ENCODE measurements at regions of chr1 and their contacts with region 1.

Region 1: GRCh38 chr1:176479971-176480370 is 17.0 kb downstream of the PAPPA2 start:
- DNase-seq: no peak
- H3K4me3 ChIP-seq: no peak overlapping the region
- H3K27ac ChIP-seq: no peak overlapping the region
- H3K4me1 ChIP-seq: no peaks in the 10 kb centered on the region
- H3K27me3 ChIP-seq: peaks cover 5% of the 10 kb centered on the region
- CTCF ChIP-seq: no peak

Region 2: GRCh38 chr1:176517484-176517883 is 37.5 kb after region 1 on chr1:
- CTCF ChIA-PET with region 1: no interaction called
- dilution Hi-C with region 1: no loop called
- in situ Hi-C with region 1: no loop called
- intact Hi-C with region 1: no loop called
- DNase-seq: peak; percentile 84
- H3K4me3 ChIP-seq: no peak overlapping the region
- H3K27ac ChIP-seq: no peak overlapping the region
- H3K4me1 ChIP-seq: peaks cover 18% of the 10 kb centered on the region
- H3K27me3 ChIP-seq: peaks cover 4% of the 10 kb centered on the region
- CTCF ChIP-seq: no peak

Region 3: GRCh38 chr1:176656257-176656995 is 176.5 kb after region 1 on chr1:
- CTCF ChIA-PET with region 1: no interaction called
- dilution Hi-C with region 1: no loop called
- in situ Hi-C with region 1: no loop called
- intact Hi-C with region 1: loop called (anchors 10 kb)
- DNase-seq: peak; percentile 71
- H3K4me3 ChIP-seq: no peak overlapping the region
- H3K27ac ChIP-seq: no peak overlapping the region
- H3K4me1 ChIP-seq: peaks cover 7% of the 10 kb centered on the region
- H3K27me3 ChIP-seq: no peaks in the 10 kb centered on the region
- CTCF ChIP-seq: no peak